ENCODE measurements at regions of chr12 and their contacts with region 1.

Region 1: DNA sequence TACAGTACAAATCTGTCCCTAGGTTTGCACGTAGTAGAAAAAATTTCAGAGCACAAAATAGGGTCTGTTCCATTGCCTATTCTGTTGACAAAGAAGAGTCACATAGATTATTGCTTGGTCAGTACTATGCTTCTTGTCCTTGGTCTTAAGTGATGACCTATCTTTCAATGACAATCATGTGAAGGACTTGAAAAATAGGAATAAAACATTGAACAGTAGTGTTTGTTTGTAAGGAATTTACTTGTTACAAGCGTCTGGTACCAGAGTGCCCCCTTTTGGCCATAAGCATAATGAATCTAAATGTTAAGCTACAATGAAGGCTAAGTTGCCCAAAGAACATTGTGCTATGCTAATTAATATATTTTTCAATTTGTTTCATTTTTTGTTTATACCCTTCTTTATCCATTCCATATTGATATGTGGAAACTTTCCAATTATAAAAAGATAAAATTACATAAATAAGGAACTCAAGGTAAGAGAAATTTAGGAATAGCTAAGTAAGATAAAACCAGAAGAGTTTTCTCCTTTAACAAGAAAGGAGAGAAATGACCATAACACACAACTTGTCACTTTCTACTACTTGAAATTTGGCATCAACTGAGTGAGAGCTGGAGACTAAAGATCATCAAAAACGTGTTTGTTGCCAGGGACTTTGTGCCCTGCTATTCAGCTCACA is 204.7 kb downstream of the EPS8 start:
- DNase-seq: peak in 4 of 9 experiments; percentile 16 to 77 (median 53)
- ATAC-seq: peak; percentile 52
- H3K4me3 ChIP-seq: no peak overlapping the region
- H3K4me3 Mint-ChIP-seq: no peak overlapping the region
- H3K27ac ChIP-seq: no peak overlapping the region
- H3K27ac Mint-ChIP-seq: no peak overlapping the region
- H3K4me1 ChIP-seq: no peaks in the 10 kb centered on the region
- H3K4me1 Mint-ChIP-seq: peaks cover 4% of the 10 kb centered on the region
- H3K27me3 ChIP-seq: peaks cover 0 to 3% of the 10 kb centered on the region in 2 experiments
- H3K27me3 Mint-ChIP-seq: no peaks in the 10 kb centered on the region
- CTCF ChIP-seq: peak; percentile 77

Region 2: DNA sequence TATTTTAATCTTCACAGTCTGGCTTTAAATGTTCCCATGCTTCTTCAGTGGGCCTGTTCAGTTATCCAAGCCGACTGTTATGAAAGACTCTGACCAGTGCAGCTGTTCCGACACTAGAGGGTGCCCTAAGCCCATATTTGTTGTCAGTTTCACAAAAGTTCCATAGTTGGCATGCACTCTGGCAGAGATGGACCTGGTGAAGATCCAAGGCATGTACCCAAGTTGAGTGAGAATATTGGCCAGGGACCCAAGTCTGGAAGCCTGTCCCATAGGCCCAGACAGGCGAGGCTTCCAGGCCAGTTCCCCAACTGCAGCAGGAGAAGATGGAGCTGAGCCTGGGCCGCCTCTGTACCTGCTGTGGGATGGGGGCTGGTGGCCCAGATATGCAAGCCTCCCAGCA is 860.7 kb before region 1 on chr12:
- CTCF ChIA-PET with region 1: no interaction called
- POLR2A ChIA-PET with region 1: no interaction called
- intact Hi-C with region 1: loop called in 1 of 2 experiments (anchors 10 kb)
- DNase-seq: peak; percentile 10 to 79 (median 56)
- ATAC-seq: peak; percentile 80
- H3K4me3 ChIP-seq: no peak overlapping the region
- H3K4me3 Mint-ChIP-seq: no peak overlapping the region
- H3K27ac ChIP-seq: no peak overlapping the region
- H3K27ac Mint-ChIP-seq: no peak overlapping the region
- H3K4me1 ChIP-seq: no peaks in the 10 kb centered on the region
- H3K4me1 Mint-ChIP-seq: no peaks in the 10 kb centered on the region
- H3K27me3 ChIP-seq: peaks cover 0 to 2% of the 10 kb centered on the region in 2 experiments
- H3K27me3 Mint-ChIP-seq: peaks cover 12% of the 10 kb centered on the region
- CTCF ChIP-seq: peak; percentile 77

Region 3: DNA sequence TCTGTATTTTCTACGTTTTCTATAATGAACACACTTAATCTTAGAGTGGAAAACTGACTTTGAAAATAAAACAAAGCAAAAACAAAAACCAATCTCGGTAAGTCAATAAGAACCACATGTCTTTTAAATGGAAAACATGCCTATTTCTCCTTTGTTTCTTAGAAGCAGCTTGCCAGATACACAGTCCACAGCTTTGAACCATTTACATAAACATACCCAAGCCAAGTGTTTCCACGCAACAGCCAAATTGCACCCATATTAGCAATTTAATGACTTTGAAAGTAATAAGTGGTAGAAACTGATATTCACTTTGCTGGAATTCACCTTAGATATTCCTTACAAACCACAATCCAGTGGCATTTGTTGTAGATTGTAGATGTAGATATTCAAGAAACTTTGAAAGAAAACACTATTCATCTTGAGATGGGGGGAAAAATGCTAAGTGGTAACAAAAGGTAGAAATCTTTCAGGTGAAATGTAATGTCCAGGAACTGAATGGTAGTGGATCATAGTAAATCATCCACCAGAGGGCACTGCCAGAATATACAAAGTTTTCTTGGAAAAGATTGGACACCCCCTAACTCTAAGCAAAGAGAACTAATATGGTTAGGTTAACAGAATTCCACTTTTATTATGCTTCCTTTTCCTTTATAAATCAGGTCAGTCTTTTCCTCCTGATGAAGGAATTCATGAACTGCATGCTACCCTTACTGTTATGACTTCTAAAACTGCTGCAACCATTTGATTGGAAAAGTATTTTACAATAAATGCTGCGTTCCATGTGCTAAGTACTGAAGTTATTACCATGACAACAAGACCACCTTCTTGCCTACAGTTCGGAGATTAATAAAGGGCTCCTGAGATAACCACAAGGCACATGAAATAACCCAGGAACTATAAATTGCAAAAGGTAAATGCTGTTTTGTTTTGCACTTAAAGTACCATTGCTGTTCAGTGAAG is 433.1 kb before region 1 on chr12:
- CTCF ChIA-PET with region 1: no interaction called
- POLR2A ChIA-PET with region 1: no interaction called
- intact Hi-C with region 1: loop called in 1 of 2 experiments (anchors 5 kb)
- DNase-seq: peak in 2 of 9 experiments; percentile 1 to 10
- ATAC-seq: no peak
- H3K4me3 ChIP-seq: no peak overlapping the region
- H3K4me3 Mint-ChIP-seq: no peak overlapping the region
- H3K27ac ChIP-seq: no peak overlapping the region
- H3K27ac Mint-ChIP-seq: no peak overlapping the region
- H3K4me1 ChIP-seq: no peaks in the 10 kb centered on the region
- H3K4me1 Mint-ChIP-seq: no peaks in the 10 kb centered on the region
- H3K27me3 ChIP-seq: no peaks in the 10 kb centered on the region
- H3K27me3 Mint-ChIP-seq: peaks cover 18% of the 10 kb centered on the region
- CTCF ChIP-seq: peak; percentile 16

Region 4: DNA sequence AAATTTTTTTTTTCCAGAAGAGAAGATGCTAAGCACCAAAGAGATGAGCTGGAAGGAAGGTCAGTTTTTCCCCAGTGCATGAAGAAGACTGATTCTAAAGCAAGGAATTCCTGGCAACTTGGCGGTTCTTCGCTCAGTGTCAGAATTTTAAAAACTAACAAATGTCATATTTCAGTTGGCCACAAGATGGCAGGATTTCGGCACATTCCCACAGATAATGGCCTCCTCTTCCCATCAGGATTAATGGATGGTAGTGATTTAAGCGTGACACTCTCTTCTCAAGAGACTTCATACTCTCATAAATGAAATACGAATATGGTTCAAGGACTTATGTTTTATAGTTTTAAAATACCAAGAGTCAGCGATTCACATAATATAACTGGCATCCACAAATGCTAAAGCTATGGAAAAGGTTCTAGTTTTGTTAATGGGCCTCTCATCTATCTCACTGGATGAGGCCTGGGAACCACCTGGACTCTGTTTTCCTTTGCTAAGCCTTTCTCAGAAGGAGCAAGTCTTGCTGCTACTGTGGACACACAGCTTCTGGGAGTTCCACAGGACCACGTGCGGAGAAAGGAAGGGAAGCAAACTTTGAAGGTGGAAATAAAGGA is 308.3 kb before region 1 on chr12:
- CTCF ChIA-PET with region 1: interaction called, 23 read pairs
- POLR2A ChIA-PET with region 1: no interaction called
- intact Hi-C with region 1: loop called in 1 of 2 experiments (anchors 2 kb)
- DNase-seq: peak in 2 of 9 experiments; percentile 18 to 25
- ATAC-seq: no peak
- H3K4me3 ChIP-seq: no peak overlapping the region
- H3K4me3 Mint-ChIP-seq: no peak overlapping the region
- H3K27ac ChIP-seq: no peak overlapping the region
- H3K27ac Mint-ChIP-seq: no peak overlapping the region
- H3K4me1 ChIP-seq: no peaks in the 10 kb centered on the region
- H3K4me1 Mint-ChIP-seq: peaks cover 9% of the 10 kb centered on the region
- H3K27me3 ChIP-seq: no peaks in the 10 kb centered on the region
- H3K27me3 Mint-ChIP-seq: peaks cover 9% of the 10 kb centered on the region
- CTCF ChIP-seq: peak; percentile 62

Region 5: DNA sequence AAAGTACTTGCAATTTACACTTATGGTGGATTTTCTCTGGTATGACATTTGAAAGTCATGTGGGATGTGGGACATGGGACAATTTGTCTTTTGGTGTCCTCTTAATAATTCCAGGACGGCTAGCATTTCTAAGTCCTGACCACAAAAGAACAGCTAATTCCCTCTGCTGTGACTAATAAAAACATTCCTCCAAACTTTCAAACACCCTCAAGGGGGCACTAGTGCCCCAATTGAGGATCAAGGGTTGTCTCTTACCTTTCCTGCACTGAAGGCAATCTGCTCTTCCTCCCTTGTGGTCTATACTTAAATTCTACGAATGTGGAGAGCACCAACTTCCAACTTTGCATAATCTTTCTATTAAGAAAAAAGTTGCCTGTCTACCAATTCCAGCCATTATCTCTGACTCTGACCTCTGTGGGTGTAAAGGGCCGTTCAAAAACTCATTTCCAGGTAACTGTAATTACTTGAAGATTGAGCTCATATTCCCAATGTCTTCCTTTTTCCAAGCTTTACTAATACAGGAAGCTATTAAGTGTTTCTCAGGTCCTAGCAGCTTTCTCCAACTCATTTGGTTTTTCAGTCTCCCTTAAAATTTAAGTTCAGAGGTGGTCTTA is 52.0 kb before region 1 on chr12:
- CTCF ChIA-PET with region 1: interaction called, 277 read pairs
- POLR2A ChIA-PET with region 1: interaction called, 19 read pairs
- intact Hi-C with region 1: loop called (anchors 1 kb)
- DNase-seq: peak; percentile 15 to 72 (median 37)
- ATAC-seq: peak; percentile 55
- H3K4me3 ChIP-seq: no peak overlapping the region
- H3K4me3 Mint-ChIP-seq: no peak overlapping the region
- H3K27ac ChIP-seq: no peak overlapping the region
- H3K27ac Mint-ChIP-seq: no peak overlapping the region
- H3K4me1 ChIP-seq: peaks cover 25% of the 10 kb centered on the region
- H3K4me1 Mint-ChIP-seq: peaks cover 18% of the 10 kb centered on the region
- H3K27me3 ChIP-seq: no peaks in the 10 kb centered on the region
- H3K27me3 Mint-ChIP-seq: no peaks in the 10 kb centered on the region
- CTCF ChIP-seq: peak; percentile 70

Region 6: DNA sequence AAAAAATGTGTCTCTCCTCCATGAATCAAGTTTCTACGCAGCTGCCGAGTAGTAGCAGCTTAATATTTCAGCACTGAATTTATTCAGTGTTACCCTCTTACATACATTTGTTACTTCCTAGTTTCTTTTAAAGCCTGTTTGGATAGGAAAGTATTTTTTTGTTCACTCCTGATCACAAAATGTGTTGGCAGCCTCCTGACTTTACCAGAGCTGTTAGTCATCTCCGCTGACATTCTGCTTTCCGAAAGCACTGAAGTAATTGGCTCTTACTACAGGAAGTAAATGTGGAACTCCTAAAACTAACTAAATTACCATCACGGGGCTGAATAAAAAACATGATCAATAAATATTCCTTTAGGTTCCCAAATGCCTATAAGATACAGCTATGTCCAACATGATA is 20.8 kb before region 1 on chr12:
- CTCF ChIA-PET with region 1: interaction called, 19 read pairs
- POLR2A ChIA-PET with region 1: no interaction called
- intact Hi-C with region 1: no loop called
- DNase-seq: peak in 3 of 9 experiments; percentile 11 to 58 (median 36)
- ATAC-seq: peak; percentile 93
- H3K4me3 ChIP-seq: peak overlapping the region in 1 of 2 experiments; percentile 38
- H3K4me3 Mint-ChIP-seq: peak overlapping the region; percentile 86
- H3K27ac ChIP-seq: peak overlapping the region; percentile 20 to 50
- H3K27ac Mint-ChIP-seq: peak overlapping the region; percentile 95
- H3K4me1 ChIP-seq: peaks cover 30% of the 10 kb centered on the region
- H3K4me1 Mint-ChIP-seq: peaks cover 36% of the 10 kb centered on the region
- H3K27me3 ChIP-seq: no peaks in the 10 kb centered on the region
- H3K27me3 Mint-ChIP-seq: no peaks in the 10 kb centered on the region
- CTCF ChIP-seq: no peak

Region 7: GRCh38 chr12:15700595-15700994 is 116.1 kb after region 1 on chr12:
- CTCF ChIA-PET with region 1: no interaction called
- POLR2A ChIA-PET with region 1: no interaction called
- intact Hi-C with region 1: no loop called
- DNase-seq: peak in 1 of 9 experiments; percentile 22
- ATAC-seq: no peak
- H3K4me3 ChIP-seq: no peak overlapping the region
- H3K4me3 Mint-ChIP-seq: no peak overlapping the region
- H3K27ac ChIP-seq: no peak overlapping the region
- H3K27ac Mint-ChIP-seq: no peak overlapping the region
- H3K4me1 ChIP-seq: no peaks in the 10 kb centered on the region
- H3K4me1 Mint-ChIP-seq: peaks cover 5% of the 10 kb centered on the region
- H3K27me3 ChIP-seq: no peaks in the 10 kb centered on the region
- H3K27me3 Mint-ChIP-seq: peaks cover 5% of the 10 kb centered on the region
- CTCF ChIP-seq: no peak

Region 8: DNA sequence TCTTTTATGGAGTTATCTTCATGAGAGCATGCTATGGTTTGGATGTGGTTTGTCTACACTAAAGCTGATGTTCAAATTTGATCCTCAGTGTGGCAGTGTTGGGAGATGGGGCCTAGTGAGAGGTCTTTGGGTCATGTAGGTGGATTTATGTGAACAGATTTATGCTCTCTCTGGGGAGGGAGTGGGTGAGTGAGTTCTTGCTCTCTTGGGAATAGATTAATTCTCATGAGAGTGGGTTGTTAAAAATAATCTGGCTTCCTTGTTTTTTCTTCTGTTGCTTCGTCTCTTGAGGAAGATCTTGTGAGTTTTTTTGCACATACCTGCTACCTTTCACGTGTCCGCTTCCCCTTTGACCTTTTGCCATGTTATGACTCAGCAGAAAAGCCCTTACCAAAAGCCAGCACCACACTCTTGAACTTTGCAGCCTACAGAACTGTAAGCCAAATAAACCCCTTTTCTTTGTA is 347.1 kb after region 1 on chr12:
- CTCF ChIA-PET with region 1: no interaction called
- POLR2A ChIA-PET with region 1: no interaction called
- intact Hi-C with region 1: no loop called
- DNase-seq: no peak
- ATAC-seq: no peak
- H3K4me3 ChIP-seq: no peak overlapping the region
- H3K4me3 Mint-ChIP-seq: no peak overlapping the region
- H3K27ac ChIP-seq: no peak overlapping the region
- H3K27ac Mint-ChIP-seq: no peak overlapping the region
- H3K4me1 ChIP-seq: no peaks in the 10 kb centered on the region
- H3K4me1 Mint-ChIP-seq: no peaks in the 10 kb centered on the region
- H3K27me3 ChIP-seq: no peaks in the 10 kb centered on the region
- H3K27me3 Mint-ChIP-seq: no peaks in the 10 kb centered on the region
- CTCF ChIP-seq: no peak

Region 9: DNA sequence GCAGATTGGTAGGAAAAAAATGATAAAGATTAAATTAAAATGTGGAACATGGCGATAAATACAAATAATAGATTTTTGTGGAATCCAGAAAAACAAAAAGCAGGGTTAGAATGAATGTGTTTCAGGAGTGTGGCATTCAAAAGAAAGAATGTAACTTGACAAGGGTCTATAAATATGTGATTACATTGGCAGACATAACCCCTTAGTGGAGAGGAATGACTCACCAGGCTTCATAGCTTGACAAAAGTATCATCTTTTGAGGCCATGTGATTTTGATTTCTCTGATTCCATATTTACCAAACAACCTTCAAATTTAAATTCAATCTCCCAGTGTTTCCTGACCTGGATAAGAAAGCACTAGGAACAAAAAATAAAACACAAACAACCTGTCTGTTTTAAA is 738.5 kb after region 1 on chr12:
- CTCF ChIA-PET with region 1: no interaction called
- POLR2A ChIA-PET with region 1: no interaction called
- intact Hi-C with region 1: no loop called
- DNase-seq: no peak
- ATAC-seq: no peak
- H3K4me3 ChIP-seq: no peak overlapping the region
- H3K4me3 Mint-ChIP-seq: no peak overlapping the region
- H3K27ac ChIP-seq: no peak overlapping the region
- H3K27ac Mint-ChIP-seq: no peak overlapping the region
- H3K4me1 ChIP-seq: no peaks in the 10 kb centered on the region
- H3K4me1 Mint-ChIP-seq: no peaks in the 10 kb centered on the region
- H3K27me3 ChIP-seq: no peaks in the 10 kb centered on the region
- H3K27me3 Mint-ChIP-seq: no peaks in the 10 kb centered on the region
- CTCF ChIP-seq: no peak

Measured in CD8-positive, alpha-beta T cell (primary cell).